ENCODE measurements at regions of chr10 and their contacts with region 1.

Region 1: GRCh38 chr10:17430647-17431355 is 23.6 kb downstream of the ST8SIA6 start:
- DNase-seq: peak; percentile 30
- ATAC-seq: peak; percentile 88
- H3K4me3 ChIP-seq: no peak overlapping the region
- H3K27ac ChIP-seq: no peak overlapping the region
- H3K4me1 ChIP-seq: no peaks in the 10 kb centered on the region
- H3K27me3 ChIP-seq: peaks cover 1 to 19% of the 10 kb centered on the region in 2 experiments; a peak in 2 of 5 replicates
- CTCF ChIP-seq: peak; percentile 77
- EP300 ChIP-seq: no peak
- POLR2A ChIP-seq: no peak
- RAD21 ChIP-seq: no peak

Region 2: DNA sequence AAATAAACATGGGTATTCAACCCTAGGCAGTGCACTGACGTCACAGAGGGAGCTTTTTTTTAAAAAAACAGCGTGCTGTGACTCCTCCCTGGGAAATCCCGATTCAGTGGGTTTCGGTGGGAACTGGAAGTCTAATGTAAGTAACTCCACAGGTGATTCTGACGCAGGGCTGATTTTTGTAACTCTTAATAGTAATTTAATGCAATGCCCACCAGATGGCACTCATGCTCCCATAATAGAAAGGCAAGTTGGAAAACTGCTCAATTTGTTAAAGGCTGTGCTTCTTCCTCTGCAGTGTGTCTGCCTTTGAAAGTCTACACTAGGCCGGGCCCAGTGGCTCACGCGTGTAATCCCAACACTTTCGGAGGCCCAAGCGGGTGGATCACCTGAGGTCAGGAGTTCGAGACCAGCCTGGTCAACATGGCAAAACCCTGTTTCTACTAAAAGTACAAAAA is 602.7 kb before region 1 on chr10:
- CTCF ChIA-PET with region 1: interaction called, 6 read pairs
- POLR2A ChIA-PET with region 1: no interaction called
- in situ Hi-C with region 1: loop called (anchors 25 kb)
- intact Hi-C with region 1: loop called (anchors 1 kb)
- DNase-seq: peak; percentile 69
- ATAC-seq: peak; percentile 80
- H3K4me3 ChIP-seq: no peak overlapping the region
- H3K27ac ChIP-seq: no peak overlapping the region
- H3K4me1 ChIP-seq: no peaks in the 10 kb centered on the region
- H3K27me3 ChIP-seq: no peaks in the 10 kb centered on the region; a peak in 1 of 5 replicates
- CTCF ChIP-seq: peak; percentile 68
- EP300 ChIP-seq: no peak
- POLR2A ChIP-seq: no peak
- RAD21 ChIP-seq: no peak

Region 3: DNA sequence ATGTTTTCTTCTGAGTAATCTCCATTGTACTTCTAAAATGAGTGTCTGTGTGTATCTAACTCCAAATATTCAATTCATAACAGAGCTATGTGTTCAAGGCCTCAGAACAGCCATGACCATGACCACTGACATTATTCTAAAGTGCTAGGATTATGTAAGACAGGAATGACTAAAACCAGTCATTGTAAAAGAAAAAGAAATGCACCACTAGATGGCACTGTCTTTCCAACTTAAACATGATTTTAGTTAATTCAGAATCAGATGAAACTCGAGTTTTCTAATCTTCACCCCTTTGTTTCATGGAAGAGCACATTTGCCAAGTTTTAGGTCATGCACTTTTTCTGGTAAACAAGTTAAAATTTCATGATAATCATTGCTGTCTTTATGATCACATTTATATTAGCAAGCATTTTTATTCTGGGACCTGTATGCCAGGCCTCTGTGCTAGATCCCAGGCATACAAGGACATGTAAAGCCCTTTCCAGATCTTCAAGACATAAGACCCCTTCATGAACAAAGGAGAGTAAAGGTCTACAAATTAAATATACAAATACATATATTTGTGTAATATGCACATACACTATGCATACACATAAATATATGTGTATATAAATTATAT is 587.4 kb before region 1 on chr10:
- CTCF ChIA-PET with region 1: interaction called, 8 read pairs
- POLR2A ChIA-PET with region 1: no interaction called
- in situ Hi-C with region 1: loop called (anchors 25 kb)
- intact Hi-C with region 1: loop called (anchors 1 kb)
- DNase-seq: peak; percentile 64
- ATAC-seq: peak; percentile 74
- H3K4me3 ChIP-seq: no peak overlapping the region
- H3K27ac ChIP-seq: no peak overlapping the region
- H3K4me1 ChIP-seq: no peaks in the 10 kb centered on the region
- H3K27me3 ChIP-seq: no peaks in the 10 kb centered on the region
- CTCF ChIP-seq: peak; percentile 66
- EP300 ChIP-seq: no peak
- POLR2A ChIP-seq: no peak
- RAD21 ChIP-seq: no peak

Region 4: DNA sequence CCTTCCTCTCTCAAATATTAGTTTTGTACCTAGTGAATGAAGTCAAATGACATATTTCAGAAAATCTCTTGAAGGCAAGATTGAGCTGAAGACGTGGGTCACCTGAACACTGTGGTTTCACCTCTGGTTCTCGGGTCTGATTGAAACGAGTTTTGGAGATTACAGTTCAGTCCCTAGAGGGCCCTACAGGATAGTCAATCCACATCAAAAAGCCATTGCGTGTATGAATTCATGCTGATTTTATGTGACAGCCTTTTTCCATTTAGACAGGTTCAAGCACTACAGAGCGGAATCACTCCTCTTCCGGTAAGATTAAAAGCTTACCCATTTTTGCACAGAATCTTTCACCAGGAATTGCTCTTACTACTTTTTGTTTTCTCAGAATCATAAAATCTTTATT is 140.6 kb before region 1 on chr10:
- CTCF ChIA-PET with region 1: no interaction called
- POLR2A ChIA-PET with region 1: no interaction called
- in situ Hi-C with region 1: no loop called
- intact Hi-C with region 1: loop called (anchors 1 kb)
- DNase-seq: no peak
- ATAC-seq: peak; percentile 57
- H3K4me3 ChIP-seq: no peak overlapping the region
- H3K27ac ChIP-seq: no peak overlapping the region
- H3K4me1 ChIP-seq: no peaks in the 10 kb centered on the region
- H3K27me3 ChIP-seq: no peaks in the 10 kb centered on the region
- CTCF ChIP-seq: peak; percentile 46
- EP300 ChIP-seq: no peak
- POLR2A ChIP-seq: no peak
- RAD21 ChIP-seq: no peak

Region 5: DNA sequence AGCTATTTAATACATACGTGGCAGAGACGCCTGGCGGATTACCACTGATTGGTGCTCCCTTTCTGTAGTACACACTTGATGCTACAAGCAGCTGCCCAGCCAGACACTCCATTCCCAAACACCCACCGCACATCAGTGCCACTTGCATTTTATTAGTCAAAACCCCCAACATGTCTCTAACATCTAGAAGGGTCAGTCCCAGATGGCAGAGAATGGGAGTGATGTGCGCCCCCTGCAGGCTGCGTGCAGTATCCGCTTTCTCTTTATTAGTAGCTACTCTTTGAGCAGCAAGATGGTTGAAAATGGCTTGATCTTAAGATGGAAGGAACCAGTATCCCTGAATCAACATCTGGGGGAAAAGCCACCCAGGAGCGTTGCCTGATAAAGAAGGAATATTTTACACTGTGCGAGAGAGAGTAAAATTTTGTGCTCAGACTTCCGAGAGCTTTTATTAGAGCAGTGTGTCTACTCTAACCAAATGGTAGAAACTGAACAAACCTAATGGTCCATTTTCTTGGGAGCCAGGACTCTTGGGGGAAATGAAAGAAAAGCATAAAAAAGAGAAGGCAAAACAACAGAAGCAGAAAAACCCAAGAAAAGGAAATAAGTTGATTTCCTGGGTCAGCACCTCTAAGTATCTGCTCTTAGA is 54.7 kb before region 1 on chr10:
- CTCF ChIA-PET with region 1: no interaction called
- POLR2A ChIA-PET with region 1: no interaction called
- in situ Hi-C with region 1: no loop called
- intact Hi-C with region 1: no loop called
- DNase-seq: peak; percentile 17
- ATAC-seq: peak; percentile 41; the same call in 1 of the 3 replicates
- H3K4me3 ChIP-seq: no peak overlapping the region
- H3K27ac ChIP-seq: no peak overlapping the region
- H3K4me1 ChIP-seq: no peaks in the 10 kb centered on the region
- H3K27me3 ChIP-seq: 0 out of 5 replicates have a peak, but pooled peaks cover 0 to 3% of the 10 kb centered on the region in 2 experiments
- CTCF ChIP-seq: peak; percentile 64
- EP300 ChIP-seq: no peak
- POLR2A ChIP-seq: no peak
- RAD21 ChIP-seq: no peak